ENCODE measurements at regions of chr2 and their contacts with region 1.

Region 1: GRCh38 chr2:158024288-158024898 is 77.3 kb upstream of the UPP2 start:
- ATAC-seq: peak in 4 of 8 experiments; percentile 32 to 71 (median 48)
- H3K4me3 ChIP-seq: no peak overlapping the region
- H3K27ac ChIP-seq: no peak overlapping the region
- H3K4me1 ChIP-seq: no peaks in the 10 kb centered on the region

Region 2: GRCh38 chr2:157302492-157303099 is 721.8 kb before region 1 on chr2:
- in situ Hi-C with region 1: loop called in 1 of 9 experiments (anchors 25 kb)
- ATAC-seq: peak; percentile 52 to 80 (median 67)
- H3K4me3 ChIP-seq: no peak overlapping the region
- H3K27ac ChIP-seq: no peak overlapping the region
- H3K4me1 ChIP-seq: peaks cover 2 to 11% of the 10 kb centered on the region in 2 donors

Region 3: GRCh38 chr2:157492189-157492773 is 532.1 kb before region 1 on chr2:
- in situ Hi-C with region 1: loop called in 2 of 9 experiments (anchors 25 kb)
- ATAC-seq: peak; percentile 62 to 83 (median 72)
- H3K4me3 ChIP-seq: no peak overlapping the region
- H3K27ac ChIP-seq: no peak overlapping the region
- H3K4me1 ChIP-seq: no peaks in the 10 kb centered on the region

Region 4: GRCh38 chr2:157777427-157777826 is 247.0 kb before region 1 on chr2:
- in situ Hi-C with region 1: loop called in 1 of 9 experiments (anchors 25 kb)
- ATAC-seq: no peak
- H3K4me3 ChIP-seq: no peak overlapping the region
- H3K27ac ChIP-seq: no peak overlapping the region
- H3K4me1 ChIP-seq: no peaks in the 10 kb centered on the region

Region 5: GRCh38 chr2:158181171-158181570 is 156.8 kb after region 1 on chr2:
- in situ Hi-C with region 1: no loop called
- ATAC-seq: no peak
- H3K4me3 ChIP-seq: no peak overlapping the region
- H3K27ac ChIP-seq: no peak overlapping the region
- H3K4me1 ChIP-seq: no peaks in the 10 kb centered on the region

Region 6: GRCh38 chr2:158753641-158754611 is 729.5 kb after region 1 on chr2:
- in situ Hi-C with region 1: loop called in 4 of 9 experiments (anchors 10 to 25 kb)
- ATAC-seq: peak; percentile 67 to 99 (median 82)
- H3K4me3 ChIP-seq: no peak overlapping the region
- H3K27ac ChIP-seq: no peak overlapping the region
- H3K4me1 ChIP-seq: peaks cover 6 to 8% of the 10 kb centered on the region in 2 donors